Endothelial cell of umbilical vein (primary cell): ENCODE measurements at regions of chr7 and their contacts with region 1.

Region 1: DNA sequence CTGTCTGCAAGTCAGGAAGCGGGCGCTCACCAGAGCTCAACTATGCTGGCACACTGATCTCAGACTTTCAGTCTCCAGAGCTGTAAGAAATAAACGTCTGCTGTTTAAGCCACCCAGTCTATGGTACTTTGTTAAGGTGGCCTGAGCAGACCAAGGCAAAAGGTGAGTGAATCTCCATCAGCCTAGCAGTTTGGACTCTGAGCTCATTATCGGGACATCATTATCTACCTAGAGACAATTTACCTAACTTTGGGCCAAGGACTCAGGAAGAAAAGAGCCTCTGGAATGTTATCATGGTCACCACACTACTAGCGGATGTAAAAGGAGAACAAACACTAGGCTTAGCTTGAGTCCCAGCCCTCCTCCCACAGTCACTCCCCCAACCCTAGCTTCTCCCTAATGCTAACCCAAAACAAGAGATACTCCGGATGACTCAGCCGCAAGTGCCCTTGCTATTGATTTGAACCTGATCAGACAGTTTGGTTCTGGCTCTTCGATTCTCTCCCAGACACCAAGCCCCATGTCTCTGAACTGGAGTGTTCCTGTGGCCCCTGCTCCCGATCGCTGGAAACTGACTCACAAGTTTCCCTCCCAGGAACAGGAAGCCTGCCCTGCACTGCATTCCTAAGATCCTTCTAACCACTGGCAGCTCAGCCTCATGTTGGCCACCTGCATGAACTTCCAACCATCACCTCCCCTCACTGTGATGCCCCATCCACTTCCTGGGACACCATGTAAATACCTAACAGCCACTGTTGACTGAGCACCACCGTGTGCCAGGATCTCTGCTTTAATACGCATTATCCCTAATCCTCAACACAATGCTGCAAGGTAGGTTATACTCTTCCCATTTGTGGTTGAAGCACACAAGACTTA is 34.5 kb downstream of the CREB3L2 start:
- DNase-seq: peak; percentile 66
- H3K4me3 ChIP-seq: no peak overlapping the region
- H3K27ac ChIP-seq: peak overlapping the region; percentile 74
- H3K4me1 ChIP-seq: peaks cover 54% of the 10 kb centered on the region
- H3K27me3 ChIP-seq: no peaks in the 10 kb centered on the region
- CTCF ChIP-seq: no peak
- POLR2A ChIP-seq: no peak

Region 2: DNA sequence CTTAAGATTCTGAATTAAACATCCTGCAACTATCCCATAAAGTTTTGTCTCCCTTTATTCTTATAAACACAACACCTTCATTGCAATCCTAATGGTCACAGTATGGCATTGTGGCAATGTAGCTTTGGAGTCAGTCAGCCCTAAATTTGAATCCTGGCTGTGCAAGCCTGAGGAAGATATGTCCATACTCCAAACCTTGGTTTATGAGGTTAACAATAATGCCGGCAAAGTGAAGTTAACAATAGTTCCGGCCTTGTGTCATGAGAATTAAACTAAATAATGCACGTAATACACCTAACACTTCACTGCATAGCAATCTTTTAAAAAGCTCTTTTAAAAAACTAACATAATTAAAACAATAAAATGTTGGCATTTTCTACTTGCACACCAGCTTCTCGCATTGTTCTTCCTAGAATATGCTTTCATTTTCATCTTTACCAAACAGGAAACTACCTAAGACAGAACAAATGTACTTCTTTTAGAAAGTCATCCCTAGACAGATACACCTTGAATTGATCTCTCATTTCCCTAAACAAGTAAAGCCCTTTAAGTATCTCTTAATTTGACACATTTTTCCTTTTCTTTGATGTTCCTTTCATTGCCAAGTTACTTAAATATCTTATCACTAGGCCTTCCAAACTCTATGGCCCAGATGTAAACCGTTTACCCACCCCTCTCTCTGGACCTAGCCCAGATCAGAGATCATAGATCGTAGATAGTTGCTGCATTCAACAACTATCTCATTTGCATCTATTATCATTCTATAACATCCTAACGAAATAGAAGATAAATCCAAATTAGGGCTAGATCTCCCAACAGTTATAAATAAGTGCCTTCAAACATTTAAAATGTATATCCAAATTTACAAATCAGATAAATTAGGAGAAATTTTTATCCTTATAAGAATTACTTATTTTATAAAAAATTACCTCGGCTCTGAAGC is 32.2 kb before region 1 on chr7:
- CTCF ChIA-PET with region 1: interaction called, 3 read pairs
- POLR2A ChIA-PET with region 1: no interaction called
- dilution Hi-C with region 1: no loop called
- intact Hi-C with region 1: loop called (anchors 2 kb)
- DNase-seq: peak; percentile 21
- H3K4me3 ChIP-seq: no peak overlapping the region
- H3K27ac ChIP-seq: no peak overlapping the region
- H3K4me1 ChIP-seq: peaks cover 36% of the 10 kb centered on the region
- H3K27me3 ChIP-seq: no peaks in the 10 kb centered on the region
- CTCF ChIP-seq: no peak
- POLR2A ChIP-seq: no peak

Region 3: DNA sequence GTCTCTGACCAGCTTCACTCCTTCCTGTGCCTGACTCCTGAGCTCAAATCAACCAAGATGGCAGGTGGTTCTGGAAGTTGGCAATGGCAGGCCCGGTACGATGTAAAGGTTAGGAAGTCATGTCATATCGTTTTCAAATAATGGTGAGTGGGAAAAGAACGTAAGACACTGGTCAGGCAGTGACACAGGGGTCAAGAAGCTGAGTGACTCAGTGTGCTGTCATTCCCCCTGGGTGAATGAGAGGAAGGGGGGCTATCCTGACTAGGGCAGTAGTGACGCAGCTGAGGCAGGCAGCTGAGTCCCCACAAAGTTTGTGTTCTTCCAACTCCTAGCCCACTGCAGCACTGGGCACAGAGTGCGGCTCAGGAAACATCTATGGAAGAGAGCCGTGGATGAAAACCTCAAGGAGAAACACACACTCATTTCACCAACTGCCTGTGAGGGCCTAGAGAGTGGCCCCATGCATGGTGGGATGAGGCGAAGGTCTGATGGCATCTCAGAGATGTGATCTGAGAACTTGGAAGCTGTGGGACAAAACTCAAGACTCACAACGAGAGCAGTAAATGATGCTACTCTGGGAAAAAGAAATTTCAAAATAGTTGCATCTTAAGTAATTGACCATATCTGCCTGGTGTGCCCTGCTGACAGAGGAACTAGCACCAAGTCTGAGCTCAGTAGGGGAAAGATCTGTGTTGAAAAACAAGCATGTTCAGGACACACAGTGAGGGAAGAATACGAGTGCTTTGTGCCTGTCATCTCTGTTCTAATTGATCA is 11.3 kb after region 1 on chr7:
- CTCF ChIA-PET with region 1: interaction called, 13 read pairs
- POLR2A ChIA-PET with region 1: interaction called, 3 read pairs
- dilution Hi-C with region 1: no loop called
- intact Hi-C with region 1: loop called (anchors 1 kb)
- DNase-seq: peak; percentile 95
- H3K4me3 ChIP-seq: no peak overlapping the region
- H3K27ac ChIP-seq: peak overlapping the region; percentile 74
- H3K4me1 ChIP-seq: peaks cover 32% of the 10 kb centered on the region
- H3K27me3 ChIP-seq: no peaks in the 10 kb centered on the region
- CTCF ChIP-seq: no peak
- POLR2A ChIP-seq: no peak